Caco-2 (cell line): ENCODE measurements at regions of chr1 and their contacts with region 1.

Region 1: GRCh38 chr1:224051086-224051406 is 62.9 kb upstream of the FBXO28 start:
- DNase-seq: no peak
- H3K4me3 ChIP-seq: no peak overlapping the region
- H3K4me3 Mint-ChIP-seq: no peak overlapping the region
- H3K27ac Mint-ChIP-seq: no peak overlapping the region
- H3K4me1 ChIP-seq: no peaks in the 10 kb centered on the region
- H3K4me1 Mint-ChIP-seq: no peaks in the 10 kb centered on the region
- H3K27me3 ChIP-seq: no peaks in the 10 kb centered on the region
- H3K27me3 Mint-ChIP-seq: no peaks in the 10 kb centered on the region
- CTCF ChIP-seq: no peak

Region 2: GRCh38 chr1:223811634-223812415 is 239.2 kb before region 1 on chr1:
- CTCF ChIA-PET with region 1: interaction called, 4 read pairs
- POLR2A ChIA-PET with region 1: no interaction called
- intact Hi-C with region 1: loop called (anchors 1 kb)
- DNase-seq: peak in 1 of 2 experiments; percentile 28
- H3K4me3 ChIP-seq: no peak overlapping the region
- H3K4me3 Mint-ChIP-seq: no peak overlapping the region
- H3K27ac Mint-ChIP-seq: no peak overlapping the region
- H3K4me1 ChIP-seq: peaks cover 22% of the 10 kb centered on the region
- H3K4me1 Mint-ChIP-seq: peaks cover 16% of the 10 kb centered on the region
- H3K27me3 ChIP-seq: no peaks in the 10 kb centered on the region
- H3K27me3 Mint-ChIP-seq: no peaks in the 10 kb centered on the region
- CTCF ChIP-seq: peak in 1 of 2 experiments; percentile 40

Region 3: GRCh38 chr1:224087286-224087794 is 36.3 kb after region 1 on chr1:
- CTCF ChIA-PET with region 1: no interaction called
- POLR2A ChIA-PET with region 1: no interaction called
- intact Hi-C with region 1: no loop called
- DNase-seq: no peak
- H3K4me3 ChIP-seq: no peak overlapping the region
- H3K4me3 Mint-ChIP-seq: no peak overlapping the region
- H3K27ac Mint-ChIP-seq: no peak overlapping the region
- H3K4me1 ChIP-seq: no peaks in the 10 kb centered on the region
- H3K4me1 Mint-ChIP-seq: peaks cover 6% of the 10 kb centered on the region
- H3K27me3 ChIP-seq: no peaks in the 10 kb centered on the region
- H3K27me3 Mint-ChIP-seq: peaks cover 6% of the 10 kb centered on the region
- CTCF ChIP-seq: no peak